ENCODE measurements at regions of chr14 and their contacts with region 1.

Region 1: GRCh38 chr14:76710056-76711010 is 50.9 kb upstream of the VASH1 start:
- DNase-seq: peak in 2 of 5 donors; percentile 12 to 13
- H3K4me3 ChIP-seq: no peak overlapping the region
- H3K4me3 Mint-ChIP-seq: no peak overlapping the region
- H3K27ac ChIP-seq: no peak overlapping the region
- H3K27ac Mint-ChIP-seq: peak overlapping the region in 1 of 8 donors; percentile 82
- H3K4me1 ChIP-seq: no peaks in the 10 kb centered on the region
- H3K4me1 Mint-ChIP-seq: no peaks in the 10 kb centered on the region
- H3K27me3 ChIP-seq: no peaks in the 10 kb centered on the region
- H3K27me3 Mint-ChIP-seq: peaks cover 10 to 26% of the 10 kb centered on the region in 2 donors

Region 2: DNA sequence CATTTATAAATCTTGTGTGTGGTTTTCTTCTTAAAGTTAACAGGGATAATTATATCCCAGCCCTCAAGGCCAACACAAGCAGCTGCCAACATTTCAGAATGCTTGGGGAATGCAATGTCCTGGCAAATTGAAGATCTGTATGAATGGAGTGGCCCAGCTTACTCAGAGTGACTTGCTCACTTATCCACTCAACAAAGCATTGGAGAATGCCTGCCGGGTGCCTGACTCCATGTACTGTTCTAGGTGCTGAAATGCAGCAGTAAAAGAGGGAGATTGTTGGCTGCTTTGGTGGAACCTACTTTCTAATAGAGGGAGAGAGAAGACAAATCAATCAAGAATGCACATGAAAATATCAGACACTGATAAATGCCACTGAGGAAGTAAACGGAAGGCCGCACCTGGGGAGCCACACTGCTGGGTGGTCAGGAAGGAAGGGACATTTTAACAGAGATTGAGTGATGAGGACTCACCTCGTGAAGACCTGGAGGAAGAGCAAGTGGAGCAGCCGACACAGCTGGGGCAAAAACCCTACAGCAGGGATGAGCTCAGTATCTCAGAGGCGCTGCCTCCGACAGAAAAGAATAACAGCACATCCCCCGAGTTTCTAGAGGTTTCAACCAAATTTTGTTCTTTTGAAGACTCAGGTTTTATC is 10.3 kb before region 1 on chr14:
- CTCF ChIA-PET with region 1: interaction called, 10 read pairs
- POLR2A ChIA-PET with region 1: no interaction called
- DNase-seq: no peak
- H3K4me3 ChIP-seq: no peak overlapping the region
- H3K4me3 Mint-ChIP-seq: no peak overlapping the region
- H3K27ac ChIP-seq: no peak overlapping the region
- H3K27ac Mint-ChIP-seq: no peak overlapping the region
- H3K4me1 ChIP-seq: no peaks in the 10 kb centered on the region
- H3K4me1 Mint-ChIP-seq: no peaks in the 10 kb centered on the region
- H3K27me3 ChIP-seq: no peaks in the 10 kb centered on the region
- H3K27me3 Mint-ChIP-seq: peaks cover 5% of the 10 kb centered on the region in 2 donors

Region 3: DNA sequence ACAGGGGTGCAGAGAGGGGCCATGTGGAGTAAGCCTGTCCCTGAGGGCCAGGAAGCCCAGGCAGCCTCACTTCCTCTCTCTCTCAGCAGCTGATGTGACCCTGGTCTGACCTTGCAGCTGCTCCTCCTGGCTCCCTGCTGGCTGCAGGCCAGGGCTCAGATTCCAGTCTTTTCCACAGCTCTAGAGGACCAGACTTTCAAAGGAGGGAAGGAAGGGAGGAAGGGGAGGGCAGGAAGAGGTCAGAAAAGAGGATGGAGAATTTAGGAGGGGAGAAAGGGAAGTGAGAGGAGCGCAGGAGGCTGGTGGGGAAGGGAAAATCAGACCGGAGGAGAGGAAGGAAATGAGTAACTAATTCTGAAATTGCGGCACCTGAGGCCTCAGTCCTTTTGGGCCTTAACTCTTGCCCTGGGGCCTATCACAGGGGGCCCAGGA is 10.1 kb after region 1 on chr14:
- CTCF ChIA-PET with region 1: interaction called, 17 read pairs
- POLR2A ChIA-PET with region 1: no interaction called
- DNase-seq: no peak
- H3K4me3 ChIP-seq: no peak overlapping the region
- H3K4me3 Mint-ChIP-seq: peak overlapping the region in 1 of 7 donors; percentile 19
- H3K27ac ChIP-seq: no peak overlapping the region
- H3K27ac Mint-ChIP-seq: peak overlapping the region in 2 of 8 donors; percentile 23 to 79
- H3K4me1 ChIP-seq: peaks cover 6% of the 10 kb centered on the region
- H3K4me1 Mint-ChIP-seq: peaks cover 0 to 7% (median 0%) of the 10 kb centered on the region in 3 donors
- H3K27me3 ChIP-seq: no peaks in the 10 kb centered on the region
- H3K27me3 Mint-ChIP-seq: peaks cover 5 to 56% of the 10 kb centered on the region in 2 donors

Region 4: GRCh38 chr14:76784266-76785264 is 74.2 kb after region 1 on chr14:
- CTCF ChIA-PET with region 1: interaction called, 57 read pairs
- POLR2A ChIA-PET with region 1: interaction called, 3 read pairs
- DNase-seq: peak; percentile 17 to 68 (median 38)
- H3K4me3 ChIP-seq: no peak overlapping the region
- H3K4me3 Mint-ChIP-seq: peak overlapping the region in 1 of 7 donors; percentile 77
- H3K27ac ChIP-seq: no peak overlapping the region
- H3K27ac Mint-ChIP-seq: peak overlapping the region in 6 of 8 donors; percentile 47 to 80 (median 73)
- H3K4me1 ChIP-seq: peaks cover 9% of the 10 kb centered on the region
- H3K4me1 Mint-ChIP-seq: peaks cover 13 to 30% (median 21%) of the 10 kb centered on the region in 3 donors
- H3K27me3 ChIP-seq: no peaks in the 10 kb centered on the region
- H3K27me3 Mint-ChIP-seq: no peaks in the 10 kb centered on the region

Region 5: GRCh38 chr14:76812211-76813044 is 102.1 kb after region 1 on chr14 and contains the start of gene ANGEL1:
- CTCF ChIA-PET with region 1: interaction called, 11 read pairs
- POLR2A ChIA-PET with region 1: no interaction called
- DNase-seq: peak; percentile 95 to 98 (median 96)
- H3K4me3 ChIP-seq: peak within 1 kb of the TSS; percentile 70
- H3K4me3 Mint-ChIP-seq: peak within 1 kb of the TSS; percentile 88 to 97 (median 95)
- H3K27ac ChIP-seq: peak within 1 kb of the TSS; percentile 60
- H3K27ac Mint-ChIP-seq: peak within 1 kb of the TSS; percentile 91 to 98 (median 95)
- H3K4me1 ChIP-seq: peaks cover 23% of the 10 kb centered on the region
- H3K4me1 Mint-ChIP-seq: peaks cover 26 to 37% (median 37%) of the 10 kb centered on the region in 3 donors
- H3K27me3 ChIP-seq: no peaks in the 10 kb centered on the region
- H3K27me3 Mint-ChIP-seq: peaks cover 0 to 4% of the 10 kb centered on the region in 2 donors
- total RNA-seq, gene ANGEL1: 16.0 to 17.1 TPM

Region 6: DNA sequence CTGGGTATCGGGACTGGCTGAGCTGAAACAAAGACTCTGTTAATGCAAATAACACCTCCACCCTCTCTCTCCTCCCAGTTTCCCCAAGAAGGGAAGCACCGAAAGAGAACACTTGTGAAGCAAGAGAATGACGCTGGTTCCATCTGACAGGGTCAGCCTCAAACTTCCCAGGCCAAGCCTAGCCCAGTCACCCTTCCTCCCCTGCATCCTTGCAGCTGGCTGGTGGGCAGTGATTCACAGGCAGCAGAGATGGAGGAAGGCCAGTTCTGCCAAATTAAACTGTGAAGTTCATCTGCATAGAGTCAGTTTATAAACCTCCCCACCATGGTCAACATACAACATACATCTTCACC is 118.7 kb after region 1 on chr14:
- CTCF ChIA-PET with region 1: no interaction called
- POLR2A ChIA-PET with region 1: no interaction called
- DNase-seq: no peak
- H3K4me3 ChIP-seq: no peak overlapping the region
- H3K4me3 Mint-ChIP-seq: no peak overlapping the region
- H3K27ac ChIP-seq: no peak overlapping the region
- H3K27ac Mint-ChIP-seq: peak overlapping the region in 1 of 8 donors; percentile 27
- H3K4me1 ChIP-seq: no peaks in the 10 kb centered on the region
- H3K4me1 Mint-ChIP-seq: no peaks in the 10 kb centered on the region
- H3K27me3 ChIP-seq: no peaks in the 10 kb centered on the region
- H3K27me3 Mint-ChIP-seq: peaks cover 6 to 11% of the 10 kb centered on the region in 2 donors

Measured in CD8-positive, alpha-beta memory T cell (primary cell).